Heart right ventricle (tissue), 16 donors: ENCODE measurements at regions of chr10 and their contacts with region 1.

Region 1: GRCh38 chr10:50614444-50615137 is 9.2 kb downstream of the SGMS1 start:
- DNase-seq: no peak
- ATAC-seq: peak in 6 of 8 donors; percentile 15 to 71 (median 54)
- H3K4me3 ChIP-seq: no peak overlapping the region
- H3K27ac ChIP-seq: peak overlapping the region in 2 of 10 donors; percentile 25 to 29
- H3K4me1 ChIP-seq: peaks cover 0 to 62% (median 38%) of the 10 kb centered on the region in 9 donors
- H3K27me3 ChIP-seq: no peaks in the 10 kb centered on the region
- CTCF ChIP-seq: peak in 4 of 9 donors; percentile 5 to 7 (median 6)

Region 2: DNA sequence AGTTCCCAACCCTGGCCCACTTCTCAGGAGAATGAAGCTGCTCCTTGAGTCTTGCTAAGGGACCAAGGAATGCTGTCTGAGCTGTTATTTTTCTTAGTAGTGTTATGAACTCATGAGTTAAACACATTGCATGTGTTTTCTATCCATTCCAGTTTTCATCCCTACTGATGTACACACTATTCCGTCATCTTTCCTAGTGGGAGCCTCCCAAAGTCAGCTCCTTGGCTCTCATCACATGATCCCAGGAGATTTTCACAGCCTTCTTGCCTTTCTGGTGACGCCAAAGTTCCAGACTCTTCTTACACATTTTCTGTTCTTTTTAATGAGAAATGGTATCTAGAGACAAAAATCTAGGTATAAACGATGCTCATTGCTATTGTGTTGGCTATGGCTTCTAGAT is 1324.0 kb before region 1 on chr10:
- intact Hi-C with region 1: loop called in 1 of 10 experiments (anchors 5 kb)
- DNase-seq: no peak
- ATAC-seq: peak in 4 of 8 donors; percentile 21 to 53 (median 49)
- H3K4me3 ChIP-seq: no peak overlapping the region
- H3K27ac ChIP-seq: peak overlapping the region in 8 of 10 donors; percentile 37 to 72 (median 54)
- H3K4me1 ChIP-seq: peaks cover 0 to 54% (median 23%) of the 10 kb centered on the region in 9 donors
- H3K27me3 ChIP-seq: no peaks in the 10 kb centered on the region
- CTCF ChIP-seq: no peak

Region 3: DNA sequence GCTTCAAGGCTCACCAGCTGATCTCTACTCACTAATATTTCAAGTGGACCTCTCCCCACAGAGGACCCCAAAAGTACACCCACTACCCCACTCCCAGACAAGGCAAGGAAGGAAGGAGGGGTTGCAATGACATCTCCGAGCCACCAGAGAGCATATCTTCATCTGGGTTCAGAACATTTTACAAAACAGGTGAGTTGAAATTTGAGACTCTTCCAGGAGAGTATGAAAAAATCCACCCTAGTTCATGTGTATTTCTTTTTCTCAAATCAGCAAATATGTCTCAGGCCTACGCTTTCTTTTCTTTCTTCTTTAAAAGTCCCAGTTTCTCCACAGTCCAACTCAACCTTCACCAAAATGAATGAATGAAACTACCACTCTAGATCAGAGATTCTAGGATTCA is 52.8 kb before region 1 on chr10:
- intact Hi-C with region 1: loop called in 2 of 10 experiments (anchors 10 kb)
- DNase-seq: no peak
- ATAC-seq: peak in 4 of 8 donors; percentile 15 to 29 (median 26)
- H3K4me3 ChIP-seq: no peak overlapping the region
- H3K27ac ChIP-seq: peak overlapping the region in 6 of 10 donors; percentile 4 to 62 (median 25)
- H3K4me1 ChIP-seq: peaks cover 10 to 48% (median 42%) of the 10 kb centered on the region in 9 donors
- H3K27me3 ChIP-seq: no peaks in the 10 kb centered on the region
- CTCF ChIP-seq: peak in 7 of 9 donors; percentile 36 to 61 (median 48)

Region 4: GRCh38 chr10:50577681-50578350 is 36.8 kb before region 1 on chr10:
- intact Hi-C with region 1: loop called in 2 of 10 experiments (anchors 5 kb)
- DNase-seq: peak in 1 of 2 donors; percentile 54
- ATAC-seq: peak; percentile 80 to 94 (median 88)
- H3K4me3 ChIP-seq: peak overlapping the region in 2 of 10 donors; percentile 1 to 11
- H3K27ac ChIP-seq: peak overlapping the region; percentile 11 to 81 (median 66)
- H3K4me1 ChIP-seq: peaks cover 0 to 56% (median 42%) of the 10 kb centered on the region in 9 donors
- H3K27me3 ChIP-seq: no peaks in the 10 kb centered on the region
- CTCF ChIP-seq: no peak

Region 5: GRCh38 chr10:50593523-50594376 is 20.8 kb before region 1 on chr10:
- intact Hi-C with region 1: no loop called
- DNase-seq: no peak
- ATAC-seq: peak in 5 of 8 donors; percentile 65 to 90 (median 69)
- H3K4me3 ChIP-seq: no peak overlapping the region
- H3K27ac ChIP-seq: no peak overlapping the region
- H3K4me1 ChIP-seq: peaks cover 0 to 33% (median 15%) of the 10 kb centered on the region in 9 donors
- H3K27me3 ChIP-seq: no peaks in the 10 kb centered on the region
- CTCF ChIP-seq: no peak

Region 6: DNA sequence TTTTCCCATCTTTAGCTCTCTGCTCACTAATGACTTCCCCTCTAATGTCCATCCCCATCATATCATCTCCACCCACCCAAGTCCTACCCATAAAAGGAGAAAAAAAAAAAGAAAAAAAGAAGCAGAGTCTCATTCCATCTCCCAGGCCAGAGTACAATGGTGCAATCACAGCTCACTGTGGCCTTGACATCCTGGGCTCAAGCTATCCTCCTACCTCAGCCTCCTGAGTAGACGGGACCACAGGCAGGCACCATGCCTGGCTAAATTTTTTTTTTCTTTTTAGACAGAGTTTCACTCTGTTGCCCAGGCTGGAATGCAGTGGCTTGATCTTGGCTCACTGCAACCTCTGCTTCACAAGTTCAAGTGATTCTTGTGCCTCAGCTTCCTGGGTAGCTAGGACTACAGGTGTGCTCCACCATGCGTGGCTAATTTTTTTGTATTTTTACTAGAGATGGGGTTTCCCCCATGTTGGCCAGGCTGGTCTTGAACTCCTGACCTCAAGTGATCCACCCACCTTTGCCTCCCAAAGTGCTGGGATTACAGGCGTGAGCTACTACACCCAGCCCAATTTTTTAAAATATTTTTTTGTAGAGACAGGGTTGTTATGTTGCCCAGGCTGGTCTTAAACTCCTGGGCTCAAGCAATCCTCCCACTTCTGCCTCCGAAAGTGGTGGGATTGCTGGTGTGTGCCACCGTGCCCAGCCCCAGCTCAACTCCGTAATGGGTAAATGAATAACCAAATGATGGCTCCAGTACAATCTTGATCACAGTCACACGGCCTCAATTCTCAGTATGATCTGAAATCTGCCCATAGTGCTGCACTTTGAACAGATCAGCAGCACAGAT is 33.7 kb after region 1 on chr10:
- intact Hi-C with region 1: no loop called
- DNase-seq: no peak
- ATAC-seq: no peak
- H3K4me3 ChIP-seq: no peak overlapping the region
- H3K27ac ChIP-seq: no peak overlapping the region
- H3K4me1 ChIP-seq: peaks cover 0 to 9% (median 1%) of the 10 kb centered on the region in 9 donors
- H3K27me3 ChIP-seq: no peaks in the 10 kb centered on the region
- CTCF ChIP-seq: no peak